Ovary (tissue), 10 donors: ENCODE measurements at regions of chr5 and their contacts with region 1.

Region 1: GRCh38 chr5:148730943-148731861 is 76.9 kb upstream of the HTR4 start:
- DNase-seq: peak; percentile 40 to 72 (median 54)
- H3K4me3 ChIP-seq: no peak overlapping the region
- H3K27ac ChIP-seq: no peak overlapping the region
- H3K4me1 ChIP-seq: no peaks in the 10 kb centered on the region
- H3K27me3 ChIP-seq: no peaks in the 10 kb centered on the region
- CTCF ChIP-seq: peak; percentile 35 to 90 (median 79)
- EP300 ChIP-seq: no peak
- POLR2A ChIP-seq: no peak

Region 2: GRCh38 chr5:148179234-148179824 is 551.9 kb before region 1 on chr5:
- intact Hi-C with region 1: loop called in 1 of 4 experiments (anchors 10 kb)
- DNase-seq: no peak
- H3K4me3 ChIP-seq: no peak overlapping the region
- H3K27ac ChIP-seq: no peak overlapping the region
- H3K4me1 ChIP-seq: no peaks in the 10 kb centered on the region
- H3K27me3 ChIP-seq: no peaks in the 10 kb centered on the region
- CTCF ChIP-seq: peak in 2 of 3 donors; percentile 45 to 52
- EP300 ChIP-seq: no peak
- POLR2A ChIP-seq: no peak

Region 3: GRCh38 chr5:148443998-148444397 is 287.2 kb before region 1 on chr5:
- intact Hi-C with region 1: loop called in 2 of 4 experiments (anchors 5 to 10 kb)
- DNase-seq: peak in 3 of 5 donors; percentile 12 to 30 (median 28)
- H3K4me3 ChIP-seq: no peak overlapping the region
- H3K27ac ChIP-seq: no peak overlapping the region
- H3K4me1 ChIP-seq: no peaks in the 10 kb centered on the region
- H3K27me3 ChIP-seq: no peaks in the 10 kb centered on the region
- CTCF ChIP-seq: peak; percentile 45 to 64 (median 47)
- EP300 ChIP-seq: no peak
- POLR2A ChIP-seq: no peak

Region 4: DNA sequence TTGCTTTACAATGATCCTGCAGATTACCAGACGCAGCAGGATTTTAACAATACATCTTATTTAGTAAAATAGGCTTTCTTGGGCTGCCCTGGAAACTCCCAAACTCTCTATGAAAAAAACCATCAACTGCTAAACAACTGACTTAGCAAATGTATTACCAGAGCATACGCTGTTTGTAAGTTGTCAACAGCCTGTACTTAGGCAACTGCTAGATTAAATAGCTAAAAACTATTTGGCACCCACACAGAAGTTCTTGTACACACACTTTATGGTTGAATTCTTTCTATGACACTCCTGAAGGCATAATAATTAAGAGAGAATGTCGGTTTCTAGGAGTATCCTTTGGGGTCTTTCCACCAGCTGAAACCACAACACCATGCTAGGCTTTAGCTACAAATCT is 223.6 kb before region 1 on chr5:
- intact Hi-C with region 1: no loop called
- DNase-seq: no peak
- H3K4me3 ChIP-seq: no peak overlapping the region
- H3K27ac ChIP-seq: no peak overlapping the region
- H3K4me1 ChIP-seq: no peaks in the 10 kb centered on the region
- H3K27me3 ChIP-seq: no peaks in the 10 kb centered on the region
- CTCF ChIP-seq: no peak
- EP300 ChIP-seq: no peak
- POLR2A ChIP-seq: no peak

Region 5: DNA sequence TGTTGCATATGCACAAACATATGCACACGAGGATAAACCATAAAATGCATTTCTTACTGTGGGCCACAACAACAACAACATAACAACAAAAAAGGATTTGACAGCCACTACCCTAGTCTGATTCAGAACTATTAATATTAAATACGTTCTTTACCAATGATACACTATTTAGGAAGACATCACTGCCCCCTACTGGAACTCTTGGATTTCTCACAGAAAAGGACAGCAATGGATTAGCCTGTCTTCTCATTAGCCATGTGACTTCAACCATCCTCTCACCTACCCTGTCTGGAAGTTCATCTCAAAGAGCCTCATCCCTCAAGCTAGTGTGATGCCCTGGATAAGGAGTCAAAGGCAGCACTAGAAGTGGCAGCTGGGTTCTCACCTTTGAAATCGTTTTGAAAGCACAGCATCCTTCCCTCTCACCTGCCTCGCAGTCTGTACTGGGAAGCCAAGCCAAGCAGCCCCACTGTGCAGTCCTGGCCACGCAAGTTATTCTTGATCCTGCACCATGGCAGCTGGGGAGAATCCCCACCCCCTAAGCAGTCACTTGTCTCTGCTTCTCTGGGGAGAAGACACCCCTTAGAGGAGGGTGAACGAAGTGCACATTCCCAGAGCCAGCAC is 267.1 kb after region 1 on chr5:
- intact Hi-C with region 1: loop called in 1 of 4 experiments (anchors 5 kb)
- DNase-seq: no peak
- H3K4me3 ChIP-seq: no peak overlapping the region
- H3K27ac ChIP-seq: no peak overlapping the region
- H3K4me1 ChIP-seq: no peaks in the 10 kb centered on the region
- H3K27me3 ChIP-seq: no peaks in the 10 kb centered on the region
- CTCF ChIP-seq: no peak
- EP300 ChIP-seq: no peak
- POLR2A ChIP-seq: no peak

Region 6: GRCh38 chr5:149035372-149035790 is 304.2 kb after region 1 on chr5:
- intact Hi-C with region 1: loop called in 3 of 4 experiments (anchors 2 to 10 kb)
- DNase-seq: peak; percentile 19 to 74 (median 44)
- H3K4me3 ChIP-seq: no peak overlapping the region
- H3K27ac ChIP-seq: no peak overlapping the region
- H3K4me1 ChIP-seq: no peaks in the 10 kb centered on the region
- H3K27me3 ChIP-seq: no peaks in the 10 kb centered on the region
- CTCF ChIP-seq: peak in 2 of 3 donors; percentile 19 to 33
- EP300 ChIP-seq: no peak
- POLR2A ChIP-seq: no peak